GM12878 (cell line): ENCODE measurements at regions of chr2 and their contacts with region 1.

Region 1: DNA sequence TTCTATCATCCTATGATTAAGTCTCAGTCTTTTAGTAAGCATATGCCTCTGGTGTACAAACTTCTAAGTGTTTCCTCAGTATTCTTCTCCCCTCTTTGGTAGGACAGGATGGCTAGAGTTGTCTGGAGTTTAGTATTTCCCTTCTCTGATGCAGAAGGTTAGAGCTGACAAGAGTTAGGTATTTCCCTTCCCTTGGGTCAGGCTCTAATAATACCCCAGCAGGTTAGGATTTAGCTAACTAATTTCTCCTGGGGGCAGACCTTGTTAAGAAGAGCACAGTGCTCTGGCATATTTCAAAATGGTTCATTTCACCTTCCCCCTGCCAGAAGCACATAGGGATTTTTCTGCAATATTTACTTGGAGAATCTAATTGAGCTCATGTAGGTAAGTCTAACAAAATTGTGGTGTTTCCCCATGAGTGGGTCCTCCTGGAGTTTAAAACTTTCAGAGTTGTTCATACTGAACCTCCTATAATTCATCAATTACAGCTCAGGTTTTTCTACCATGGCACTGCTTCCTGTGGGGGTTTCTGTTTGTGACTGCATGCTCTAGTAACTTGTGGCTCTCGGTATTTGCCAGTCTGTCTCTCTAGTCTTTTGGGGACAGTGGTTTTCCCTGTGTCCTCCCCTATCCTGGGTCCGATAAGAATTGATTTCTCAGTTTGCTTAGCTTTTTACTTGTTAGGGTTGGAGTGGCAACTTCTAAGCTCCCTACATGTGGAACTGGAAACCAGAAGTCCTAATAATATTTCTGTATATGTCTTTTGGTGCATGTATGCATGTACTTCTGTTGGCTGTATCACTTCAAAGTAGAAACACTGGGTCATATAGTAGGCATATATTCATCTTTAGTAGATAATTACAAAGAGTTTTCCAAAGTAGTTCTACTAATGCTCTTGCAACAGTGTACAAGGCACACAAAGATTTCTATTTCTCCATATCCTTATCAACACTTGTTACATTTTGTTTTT is 77.7 kb downstream of the GDF7 start:
- DNase-seq: peak; percentile 42
- ATAC-seq: peak; percentile 98
- H3K4me3 ChIP-seq: no peak overlapping the region
- H3K27ac ChIP-seq: peak overlapping the region; percentile 48; the same call in 1 of the 2 replicates
- H3K4me1 ChIP-seq: peaks cover 7% of the 10 kb centered on the region; the same call in 1 of the 2 replicates
- H3K27me3 ChIP-seq: no peaks in the 10 kb centered on the region
- CTCF ChIP-seq: no peak
- EP300 ChIP-seq: no peak
- POLR2A ChIP-seq: no peak
- RAD21 ChIP-seq: no peak

Region 2: GRCh38 chr2:20617892-20618467 is 126.7 kb before region 1 on chr2:
- CTCF ChIA-PET with region 1: no interaction called
- POLR2A ChIA-PET with region 1: no interaction called
- RAD21 ChIA-PET with region 1: no interaction called
- SMC1A ChIA-PET with region 1: no interaction called
- in situ Hi-C with region 1: no loop called
- intact Hi-C with region 1: no loop called
- DNase-seq: no peak
- ATAC-seq: peak; percentile 67
- H3K4me3 ChIP-seq: no peak overlapping the region
- H3K27ac ChIP-seq: no peak overlapping the region
- H3K4me1 ChIP-seq: no peaks in the 10 kb centered on the region
- H3K27me3 ChIP-seq: no peaks in the 10 kb centered on the region
- CTCF ChIP-seq: 0 out of 6 replicates have a peak, but pooled peaks of 1 of the 3 experiments have one; percentile 15
- EP300 ChIP-seq: no peak
- POLR2A ChIP-seq: no peak
- RAD21 ChIP-seq: no peak

Region 3: DNA sequence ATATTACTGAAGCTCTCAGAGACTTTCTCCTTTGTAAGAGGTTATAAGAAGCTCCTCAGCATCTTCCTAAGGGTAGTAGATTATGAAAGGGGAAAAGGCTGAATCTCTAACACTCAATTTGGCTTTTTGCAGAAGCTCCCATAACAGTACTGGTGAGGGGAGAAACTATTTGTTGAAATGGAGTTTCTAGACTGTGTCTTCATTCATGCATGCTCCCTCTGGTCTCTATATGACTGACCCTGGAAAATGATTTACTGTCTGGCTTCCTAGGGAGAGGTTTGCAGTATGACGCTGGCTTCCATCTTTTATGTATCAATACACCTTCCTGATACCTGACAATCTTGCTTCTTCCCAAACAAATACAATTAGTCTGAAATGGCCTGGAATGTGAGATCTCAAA is 14.3 kb after region 1 on chr2:
- CTCF ChIA-PET with region 1: interaction called, 6 read pairs
- POLR2A ChIA-PET with region 1: interaction called, 3 read pairs
- RAD21 ChIA-PET with region 1: interaction called, 6 read pairs
- SMC1A ChIA-PET with region 1: interaction called, 25 read pairs
- in situ Hi-C with region 1: no loop called
- intact Hi-C with region 1: no loop called
- DNase-seq: no peak
- ATAC-seq: peak; percentile 67
- H3K4me3 ChIP-seq: no peak overlapping the region
- H3K27ac ChIP-seq: no peak overlapping the region
- H3K4me1 ChIP-seq: no peaks in the 10 kb centered on the region
- H3K27me3 ChIP-seq: no peaks in the 10 kb centered on the region
- CTCF ChIP-seq: no peak
- EP300 ChIP-seq: no peak
- POLR2A ChIP-seq: no peak
- RAD21 ChIP-seq: no peak

Region 4: GRCh38 chr2:20822535-20823490 is 78.2 kb after region 1 on chr2 and contains the start of gene LDAH:
- CTCF ChIA-PET with region 1: interaction called, 4 read pairs
- POLR2A ChIA-PET with region 1: no interaction called
- RAD21 ChIA-PET with region 1: no interaction called
- SMC1A ChIA-PET with region 1: no interaction called
- in situ Hi-C with region 1: no loop called
- intact Hi-C with region 1: loop called (anchors 5 kb)
- DNase-seq: peak; percentile 36
- ATAC-seq: peak; percentile 90
- H3K4me3 ChIP-seq: peak within 1 kb of the TSS; percentile 97
- H3K27ac ChIP-seq: peak within 1 kb of the TSS; percentile 94
- H3K4me1 ChIP-seq: no peaks in the 10 kb centered on the region
- H3K27me3 ChIP-seq: no peaks in the 10 kb centered on the region
- CTCF ChIP-seq: no peak
- EP300 ChIP-seq: 0 out of 4 replicates have a peak, but pooled peaks of 1 of the 2 experiments have one; percentile 20
- POLR2A ChIP-seq: peak; percentile 87
- RAD21 ChIP-seq: no peak
- polyA plus RNA-seq, gene LDAH: 18.7 to 25.0 TPM